H1 (cell line): ENCODE measurements at regions of chr1 and their contacts with region 1.

Region 1: GRCh38 chr1:77313491-77313890 is 31.7 kb downstream of the AK5 start:
- DNase-seq: peak; percentile 58 to 64
- H3K4me3 ChIP-seq: no peak overlapping the region
- H3K27ac ChIP-seq: no peak overlapping the region
- H3K4me1 ChIP-seq: no peaks in the 10 kb centered on the region
- H3K27me3 ChIP-seq: no peaks in the 10 kb centered on the region
- CTCF ChIP-seq: peak; percentile 61 to 79 (median 75)
- EP300 ChIP-seq: no peak
- POLR2A ChIP-seq: no peak
- RAD21 ChIP-seq: peak; percentile 62 to 69

Region 2: DNA sequence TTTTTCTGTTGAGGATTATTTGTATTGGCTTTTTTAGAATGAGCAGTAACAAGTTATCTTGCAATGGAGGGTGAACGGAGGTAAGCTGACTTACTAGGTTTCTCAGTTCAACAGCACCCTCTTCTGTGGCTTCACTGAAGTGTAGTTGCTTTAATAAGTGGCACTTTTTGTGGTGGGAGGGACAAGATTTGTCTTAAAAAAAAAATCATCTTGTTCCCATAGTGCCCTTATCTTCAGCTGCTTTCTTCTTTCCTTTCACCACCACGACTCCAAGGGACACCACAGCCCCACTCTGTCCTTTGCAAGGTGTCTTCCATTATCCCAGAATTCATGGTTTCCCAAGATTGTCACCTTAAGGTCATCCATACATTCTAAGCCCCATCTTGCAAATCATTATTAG is 187.2 kb before region 1 on chr1:
- CTCF ChIA-PET with region 1: no interaction called
- POLR2A ChIA-PET with region 1: no interaction called
- DNase-seq: no peak
- H3K4me3 ChIP-seq: no peak overlapping the region
- H3K27ac ChIP-seq: no peak overlapping the region
- H3K4me1 ChIP-seq: no peaks in the 10 kb centered on the region
- H3K27me3 ChIP-seq: no peaks in the 10 kb centered on the region
- CTCF ChIP-seq: peak in 2 of 3 experiments; percentile 65 to 72; a peak in 3 of 4 replicates
- EP300 ChIP-seq: no peak
- POLR2A ChIP-seq: no peak
- RAD21 ChIP-seq: peak; percentile 94 to 96

Region 3: DNA sequence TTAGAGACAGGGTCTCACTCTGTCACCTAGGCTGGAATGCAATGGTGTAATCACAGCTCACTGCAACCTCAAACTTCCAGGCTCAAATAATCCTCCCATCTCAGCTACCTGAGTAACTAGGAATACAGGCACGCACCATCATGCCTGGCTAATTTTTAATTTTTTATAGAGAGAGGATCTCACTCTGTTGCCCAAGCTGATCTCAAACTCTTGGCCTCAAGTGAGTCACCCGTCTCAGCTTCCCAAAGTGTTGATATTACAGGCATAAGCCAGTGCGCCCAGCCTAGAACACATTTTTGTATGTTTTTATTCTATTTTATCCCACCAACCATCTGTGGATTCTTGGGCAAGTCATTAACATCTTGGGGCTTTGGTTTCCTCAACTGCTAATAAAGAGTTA is 68.9 kb after region 1 on chr1:
- CTCF ChIA-PET with region 1: no interaction called
- POLR2A ChIA-PET with region 1: no interaction called
- DNase-seq: no peak
- H3K4me3 ChIP-seq: no peak overlapping the region
- H3K27ac ChIP-seq: no peak overlapping the region
- H3K4me1 ChIP-seq: peaks cover 0 to 2% (median 0%) of the 10 kb centered on the region in 4 experiments; a peak in 1 of 7 replicates
- H3K27me3 ChIP-seq: no peaks in the 10 kb centered on the region
- CTCF ChIP-seq: no peak
- EP300 ChIP-seq: no peak
- POLR2A ChIP-seq: no peak
- RAD21 ChIP-seq: no peak

Region 4: DNA sequence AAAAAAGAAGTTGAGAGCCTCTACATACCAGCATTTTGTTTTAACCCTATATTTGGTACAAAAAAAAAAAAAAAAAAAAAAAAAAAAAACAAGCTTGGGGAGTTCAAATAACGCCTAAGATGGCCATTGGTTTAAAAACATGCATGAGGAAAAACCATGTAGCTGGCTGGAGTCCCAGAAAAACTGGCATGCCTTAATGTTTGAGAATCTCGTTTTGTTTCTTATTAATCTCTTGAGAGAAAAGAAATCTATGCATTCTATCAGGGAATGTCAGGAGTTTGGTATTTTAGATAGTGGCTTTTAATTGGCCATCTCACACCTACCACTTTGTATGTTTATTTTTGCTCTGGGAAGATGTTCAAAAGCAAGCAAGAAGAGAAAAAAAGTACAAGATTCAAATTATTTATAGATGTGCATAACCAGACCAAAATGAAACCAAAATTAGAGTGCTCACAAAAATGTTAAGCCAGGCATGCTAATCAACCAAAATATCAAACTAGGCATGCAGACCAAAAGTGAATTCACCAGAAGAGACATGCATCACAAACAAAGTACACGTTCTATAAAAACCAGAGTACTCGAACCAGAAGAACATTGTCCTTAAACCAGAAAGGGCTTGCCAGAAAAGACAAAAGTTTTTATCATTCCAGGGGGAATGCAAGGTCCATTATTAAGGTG is 124.9 kb after region 1 on chr1:
- CTCF ChIA-PET with region 1: interaction called, 10 read pairs
- POLR2A ChIA-PET with region 1: no interaction called
- DNase-seq: no peak
- H3K4me3 ChIP-seq: no peak overlapping the region
- H3K27ac ChIP-seq: no peak overlapping the region
- H3K4me1 ChIP-seq: no peaks in the 10 kb centered on the region
- H3K27me3 ChIP-seq: no peaks in the 10 kb centered on the region
- CTCF ChIP-seq: no peak
- EP300 ChIP-seq: no peak
- POLR2A ChIP-seq: no peak
- RAD21 ChIP-seq: no peak